ENCODE measurements at regions of chr11 and their contacts with region 1.

Region 1: GRCh38 chr11:111454561-111455192 is 57.5 kb downstream of the BTG4 start:
- DNase-seq: peak; percentile 50 to 72 (median 72)
- H3K4me3 ChIP-seq: no peak overlapping the region
- H3K27ac ChIP-seq: no peak overlapping the region
- H3K4me1 ChIP-seq: peaks cover 0 to 4% (median 1%) of the 10 kb centered on the region in 4 experiments
- H3K27me3 ChIP-seq: peaks cover 0 to 6% (median 0%) of the 10 kb centered on the region in 5 experiments

Region 2: DNA sequence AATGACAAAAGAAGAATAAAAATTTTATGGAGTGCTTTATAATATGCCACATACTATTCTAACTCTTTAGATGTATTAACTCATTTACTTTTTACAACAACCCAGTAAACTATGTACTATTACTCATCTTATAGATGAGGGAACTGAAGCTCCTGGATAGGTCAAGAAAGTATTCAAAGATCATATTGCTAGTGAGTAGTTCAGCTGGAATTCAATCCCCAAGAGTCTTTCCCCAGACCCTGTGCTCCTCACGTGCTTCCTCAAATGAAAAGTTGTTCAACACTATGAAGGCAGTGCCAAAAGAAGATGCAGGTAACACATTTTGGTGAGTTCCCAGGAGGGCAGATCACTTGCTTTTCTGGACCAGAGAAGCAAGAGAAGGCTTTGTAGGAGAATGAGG is 10.7 kb after region 1 on chr11:
- CTCF ChIA-PET with region 1: interaction called, 10 read pairs
- POLR2A ChIA-PET with region 1: no interaction called
- DNase-seq: no peak
- H3K4me3 ChIP-seq: no peak overlapping the region
- H3K27ac ChIP-seq: no peak overlapping the region
- H3K4me1 ChIP-seq: peaks cover 0 to 24% (median 12%) of the 10 kb centered on the region in 4 experiments
- H3K27me3 ChIP-seq: peaks cover 0 to 3% (median 0%) of the 10 kb centered on the region in 5 experiments